ENCODE measurements at regions of chr2 and their contacts with region 1.

Region 1: DNA sequence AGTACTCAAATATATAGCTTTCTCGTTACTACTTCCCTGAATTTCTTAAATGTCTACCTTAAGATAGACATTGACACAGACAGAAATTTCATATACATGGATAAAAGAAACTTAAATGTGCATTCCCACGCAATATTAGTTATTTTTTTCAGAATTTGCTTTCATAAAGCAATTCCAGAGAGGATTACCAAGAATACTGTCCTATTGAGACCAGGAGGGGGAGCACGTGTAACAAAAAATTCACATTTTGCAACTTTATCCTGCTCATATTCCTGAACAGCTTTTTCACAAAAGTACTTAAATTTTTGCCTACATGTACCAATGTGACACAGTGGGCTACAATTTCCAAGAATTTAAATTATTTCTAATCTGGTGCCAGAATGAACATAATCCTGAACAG is 30.7 kb upstream of the ERCC3 start:
- DNase-seq: no peak
- ATAC-seq: peak; percentile 64
- H3K4me3 ChIP-seq: no peak overlapping the region
- H3K27ac ChIP-seq: no peak overlapping the region
- H3K4me1 ChIP-seq: no peaks in the 10 kb centered on the region
- H3K27me3 ChIP-seq: no peaks in the 10 kb centered on the region
- CTCF ChIP-seq: peak; percentile 53 to 70 (median 58); a peak in 5 of 6 replicates
- POLR2A ChIP-seq: no peak
- RAD21 ChIP-seq: peak; percentile 65

Region 2: DNA sequence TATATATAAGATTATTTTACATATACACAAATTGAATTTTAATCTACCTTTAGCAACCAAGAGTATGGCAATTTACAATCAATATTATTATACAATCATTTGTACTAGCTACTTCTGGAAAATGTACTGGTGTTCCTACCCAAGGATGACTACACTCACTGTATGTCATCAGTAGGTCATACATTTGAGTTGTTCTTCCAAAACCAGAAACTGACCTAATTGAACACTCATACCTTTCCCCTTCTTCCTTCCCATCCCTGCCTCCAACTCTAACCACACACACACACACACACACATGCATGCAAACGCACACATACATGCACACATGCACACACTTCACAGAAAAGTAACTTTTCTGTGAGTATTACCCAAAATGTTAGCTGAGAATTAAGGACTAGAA is 22.5 kb before region 1 on chr2:
- CTCF ChIA-PET with region 1: no interaction called
- POLR2A ChIA-PET with region 1: no interaction called
- RAD21 ChIA-PET with region 1: no interaction called
- intact Hi-C with region 1: no loop called
- DNase-seq: no peak
- ATAC-seq: no peak
- H3K4me3 ChIP-seq: no peak overlapping the region
- H3K27ac ChIP-seq: no peak overlapping the region
- H3K4me1 ChIP-seq: no peaks in the 10 kb centered on the region
- H3K27me3 ChIP-seq: no peaks in the 10 kb centered on the region
- CTCF ChIP-seq: no peak
- POLR2A ChIP-seq: no peak
- RAD21 ChIP-seq: no peak

Region 3: GRCh38 chr2:127649684-127650040 is 325.0 kb after region 1 on chr2:
- CTCF ChIA-PET with region 1: no interaction called
- POLR2A ChIA-PET with region 1: no interaction called
- RAD21 ChIA-PET with region 1: no interaction called
- intact Hi-C with region 1: loop called (anchors 10 kb)
- DNase-seq: peak; percentile 72
- ATAC-seq: peak; percentile 84
- H3K4me3 ChIP-seq: no peak overlapping the region
- H3K27ac ChIP-seq: no peak overlapping the region
- H3K4me1 ChIP-seq: peaks cover 9 to 31% of the 10 kb centered on the region in 2 experiments
- H3K27me3 ChIP-seq: no peaks in the 10 kb centered on the region
- CTCF ChIP-seq: peak; percentile 85 to 90 (median 87)
- POLR2A ChIP-seq: no peak
- RAD21 ChIP-seq: peak; percentile 81